ENCODE measurements at regions of chr20 and their contacts with region 1.

Region 1: GRCh38 chr20:39036011-39036410 is 73.9 kb downstream of the DHX35 start:
- DNase-seq: no peak
- H3K4me3 ChIP-seq: no peak overlapping the region
- H3K27ac ChIP-seq: peak overlapping the region; percentile 85 to 90 (median 88)
- H3K4me1 ChIP-seq: peaks cover 0 to 35% (median 14%) of the 10 kb centered on the region in 4 donors
- H3K27me3 ChIP-seq: no peaks in the 10 kb centered on the region
- CTCF ChIP-seq: no peak
- EP300 ChIP-seq: no peak
- POLR2A ChIP-seq: no peak

Region 2: DNA sequence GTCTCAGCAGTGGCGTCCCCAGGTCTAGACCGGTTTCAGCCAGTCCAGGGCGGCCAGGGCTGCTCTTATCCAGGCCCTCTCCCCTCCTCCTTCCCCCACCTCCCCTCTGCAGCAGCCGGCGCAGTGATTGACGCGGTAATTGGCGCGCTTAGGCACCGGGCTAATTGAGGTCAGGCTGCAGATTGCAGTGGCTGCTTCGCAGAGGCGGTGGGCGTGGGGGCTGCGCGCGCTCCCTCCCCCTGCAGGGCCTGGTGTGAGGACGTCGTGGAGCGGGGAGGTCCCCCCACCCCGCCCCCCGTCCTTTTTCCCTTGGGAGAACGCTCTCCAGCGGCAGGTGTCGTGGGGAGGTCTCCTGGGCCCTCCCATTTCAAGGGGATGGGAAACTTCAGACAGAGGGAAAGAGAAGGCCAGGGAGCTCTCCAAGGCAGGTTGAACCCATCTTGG is 1437.9 kb before region 1 on chr20:
- intact Hi-C with region 1: no loop called
- DNase-seq: no peak
- H3K4me3 ChIP-seq: no peak overlapping the region
- H3K27ac ChIP-seq: no peak overlapping the region
- H3K4me1 ChIP-seq: peaks cover 0 to 8% (median 4%) of the 10 kb centered on the region in 4 donors
- H3K27me3 ChIP-seq: peaks cover 0 to 57% (median 7%) of the 10 kb centered on the region in 4 donors
- CTCF ChIP-seq: no peak
- EP300 ChIP-seq: no peak
- POLR2A ChIP-seq: no peak

Region 3: DNA sequence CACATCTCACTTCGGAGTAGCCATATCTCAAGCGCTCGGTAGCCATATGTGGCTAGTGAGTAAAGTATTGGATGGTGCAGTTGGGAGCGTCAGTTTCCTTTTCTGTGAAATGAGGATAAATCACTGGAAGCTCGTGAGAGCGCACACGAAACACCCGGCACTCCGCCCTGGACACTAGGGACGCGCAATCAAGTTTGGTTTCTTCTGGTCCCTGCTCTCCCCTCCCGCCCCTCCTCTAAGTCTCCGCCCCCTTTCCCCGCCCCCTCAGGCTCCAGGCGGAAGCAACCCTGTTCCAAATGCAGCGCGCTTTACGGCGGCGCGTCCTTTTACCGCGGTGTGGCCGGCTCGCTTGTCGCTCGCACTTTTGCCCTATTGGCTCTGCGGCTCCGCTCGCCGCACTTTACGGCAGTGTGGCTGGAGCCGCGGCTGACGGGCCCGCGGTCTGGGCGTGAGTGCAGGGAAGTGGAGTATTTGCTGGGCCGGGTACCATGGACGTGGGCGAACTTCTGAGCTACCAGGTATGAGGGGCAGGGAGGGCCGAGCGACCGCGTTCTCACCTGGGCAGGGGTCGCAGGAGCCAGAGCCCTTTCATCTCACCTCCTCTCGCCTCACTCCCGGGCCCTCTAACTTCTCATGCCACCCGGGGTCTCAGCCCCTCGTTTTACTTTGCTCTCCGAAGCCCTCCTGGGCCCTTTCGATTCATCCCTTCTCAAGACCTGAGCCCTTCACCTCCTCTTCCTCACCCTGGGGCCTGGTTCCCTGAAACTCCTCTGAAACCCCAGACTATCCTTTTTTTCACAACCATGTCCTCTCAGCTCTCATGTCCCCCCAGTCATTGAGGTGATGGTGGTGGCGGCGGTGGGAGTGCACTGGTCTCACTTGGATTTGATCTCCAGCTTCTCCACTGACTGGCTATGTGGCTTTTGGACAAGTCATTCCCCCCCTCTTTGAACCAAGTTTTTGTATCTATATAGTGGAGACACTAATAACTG is 1342.1 kb before region 1 on chr20 and contains the start of gene CTNNBL1:
- intact Hi-C with region 1: no loop called
- DNase-seq: peak; percentile 97
- H3K4me3 ChIP-seq: peak within 1 kb of the TSS; percentile 77 to 93 (median 85)
- H3K27ac ChIP-seq: peak within 1 kb of the TSS; percentile 69 to 79 (median 74)
- H3K4me1 ChIP-seq: peaks cover 19 to 34% (median 29%) of the 10 kb centered on the region in 4 donors
- H3K27me3 ChIP-seq: no peaks in the 10 kb centered on the region
- CTCF ChIP-seq: peak in 2 of 3 experiments; percentile 10 to 27
- EP300 ChIP-seq: no peak
- POLR2A ChIP-seq: peak; percentile 42
- total RNA-seq, gene CTNNBL1: 40.4 to 54.3 (median 44.7) TPM

Region 4: GRCh38 chr20:38961530-38962043 is 74.4 kb before region 1 on chr20:
- intact Hi-C with region 1: no loop called
- DNase-seq: no peak
- H3K4me3 ChIP-seq: peak overlapping the region; percentile 82 to 99 (median 96)
- H3K27ac ChIP-seq: peak overlapping the region; percentile 91 to 98 (median 98)
- H3K4me1 ChIP-seq: peaks cover 15 to 33% (median 27%) of the 10 kb centered on the region in 4 donors
- H3K27me3 ChIP-seq: peaks cover 0 to 2% (median 0%) of the 10 kb centered on the region in 4 donors
- CTCF ChIP-seq: no peak
- EP300 ChIP-seq: no peak
- POLR2A ChIP-seq: no peak

Region 5: DNA sequence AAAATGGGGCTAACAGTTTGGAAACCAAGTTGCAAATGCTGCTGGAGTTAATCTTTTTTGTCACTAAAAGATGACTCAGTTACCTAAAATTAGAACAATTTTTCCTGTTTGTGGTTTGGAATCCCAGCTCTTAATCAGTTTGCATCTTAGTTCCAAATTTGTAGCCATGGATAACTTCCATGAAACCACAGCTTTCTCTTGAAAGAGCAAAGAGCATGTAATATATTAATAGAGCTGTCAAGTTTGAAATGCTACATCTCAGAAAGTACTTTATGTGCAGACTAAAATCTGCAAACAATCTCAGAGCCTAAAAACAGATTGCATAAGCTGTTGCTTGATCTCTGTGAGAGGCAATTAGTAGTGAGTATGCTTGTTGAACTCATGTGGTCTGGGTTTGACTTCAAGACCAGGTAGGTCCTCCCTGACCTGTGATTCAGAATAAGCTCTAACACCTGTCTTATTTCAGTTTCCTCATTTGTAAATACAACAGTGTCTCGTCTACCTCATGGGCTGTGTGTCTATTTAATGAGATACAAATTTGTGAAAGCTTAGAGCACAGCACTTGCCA is 50.3 kb before region 1 on chr20:
- intact Hi-C with region 1: loop called (anchors 5 kb)
- DNase-seq: no peak
- H3K4me3 ChIP-seq: peak overlapping the region in 1 of 4 donors; percentile 4
- H3K27ac ChIP-seq: peak overlapping the region; percentile 79 to 98 (median 84)
- H3K4me1 ChIP-seq: peaks cover 24 to 62% (median 58%) of the 10 kb centered on the region in 4 donors
- H3K27me3 ChIP-seq: no peaks in the 10 kb centered on the region
- CTCF ChIP-seq: no peak
- EP300 ChIP-seq: peak; percentile 85
- POLR2A ChIP-seq: no peak

Measured in esophagus muscularis mucosa (tissue), 4 donors.